ENCODE measurements at regions of chr22 and their contacts with region 1.

Region 1: GRCh38 chr22:37599153-37599552 is 9.5 kb upstream of the GGA1 start:
- DNase-seq: peak in 1 of 2 donors; percentile 46
- H3K4me3 ChIP-seq: no peak overlapping the region
- CTCF ChIP-seq: no peak
- POLR2A ChIP-seq: no peak

Region 2: GRCh38 chr22:37544955-37545699 is 54.0 kb before region 1 on chr22:
- intact Hi-C with region 1: loop called (anchors 10 kb)
- DNase-seq: peak in 1 of 2 donors; percentile 89
- H3K4me3 ChIP-seq: no peak overlapping the region
- CTCF ChIP-seq: peak in 1 of 3 donors; percentile 18
- POLR2A ChIP-seq: no peak

Region 3: GRCh38 chr22:37561212-37562048 is 37.7 kb before region 1 on chr22:
- intact Hi-C with region 1: no loop called
- DNase-seq: peak; percentile 91 to 99
- H3K4me3 ChIP-seq: peak overlapping the region; percentile 61
- CTCF ChIP-seq: peak in 1 of 3 donors; percentile 50
- POLR2A ChIP-seq: no peak

Region 4: DNA sequence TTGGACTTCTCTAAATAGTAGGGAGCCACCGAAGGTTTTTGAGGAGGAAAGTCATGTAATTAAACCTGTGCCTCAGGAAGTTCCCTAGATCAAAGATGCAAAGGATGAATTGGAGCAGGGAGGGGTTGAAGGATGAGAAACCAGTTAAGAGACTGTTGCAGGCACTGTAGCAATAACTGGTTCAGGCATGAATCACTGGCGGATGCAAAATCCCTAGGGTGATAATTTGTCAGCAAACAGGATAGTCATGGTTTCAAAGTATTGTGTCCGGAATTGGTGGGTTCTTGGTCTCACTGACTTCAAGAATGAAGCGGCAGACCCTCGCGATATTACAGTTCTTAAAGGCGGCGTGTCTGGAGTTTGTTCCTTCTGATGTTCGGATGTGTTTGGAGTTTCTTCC is 117.6 kb after region 1 on chr22:
- intact Hi-C with region 1: no loop called
- DNase-seq: no peak
- H3K4me3 ChIP-seq: no peak overlapping the region
- CTCF ChIP-seq: no peak
- POLR2A ChIP-seq: no peak